OCI-LY7 (cell line): ENCODE measurements at regions of chr2 and their contacts with region 1.

Region 1: GRCh38 chr2:173571021-173571882 is 216.6 kb downstream of the CDCA7 start:
- DNase-seq: peak; percentile 50
- H3K4me3 ChIP-seq: no peak overlapping the region
- H3K27ac ChIP-seq: no peak overlapping the region
- H3K4me1 ChIP-seq: no peaks in the 10 kb centered on the region
- CTCF ChIP-seq: peak; percentile 64

Region 2: GRCh38 chr2:173607606-173608311 is 36.5 kb after region 1 on chr2:
- CTCF ChIA-PET with region 1: no interaction called
- POLR2A ChIA-PET with region 1: interaction called, 5 read pairs
- intact Hi-C with region 1: loop called (anchors 5 kb)
- DNase-seq: no peak
- H3K4me3 ChIP-seq: no peak overlapping the region
- H3K27ac ChIP-seq: no peak overlapping the region
- H3K4me1 ChIP-seq: no peaks in the 10 kb centered on the region
- CTCF ChIP-seq: no peak

Region 3: DNA sequence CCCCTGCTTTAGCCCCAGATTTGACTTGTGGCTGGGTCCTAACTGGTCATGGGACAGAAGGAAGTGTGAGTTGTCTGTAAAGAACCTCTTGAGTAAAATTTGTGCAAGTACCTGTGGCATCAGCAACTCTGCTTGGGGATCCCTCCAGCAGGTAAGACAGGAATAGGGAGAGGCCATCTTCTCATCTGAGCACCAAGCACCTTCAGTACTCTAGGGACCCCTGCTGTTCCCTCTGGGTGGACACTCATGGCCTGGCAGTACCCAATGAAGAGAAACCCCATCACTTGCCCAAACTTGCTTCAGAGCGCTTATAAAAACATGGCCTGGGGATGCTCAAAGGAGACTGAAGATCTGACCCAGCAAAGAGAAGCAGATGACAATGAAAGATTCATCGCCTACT is 96.2 kb after region 1 on chr2:
- CTCF ChIA-PET with region 1: no interaction called
- POLR2A ChIA-PET with region 1: no interaction called
- intact Hi-C with region 1: loop called (anchors 5 kb)
- DNase-seq: no peak
- H3K4me3 ChIP-seq: no peak overlapping the region
- H3K27ac ChIP-seq: no peak overlapping the region
- H3K4me1 ChIP-seq: no peaks in the 10 kb centered on the region
- CTCF ChIP-seq: peak; percentile 29; the same call in 1 of the 2 replicates

Region 4: DNA sequence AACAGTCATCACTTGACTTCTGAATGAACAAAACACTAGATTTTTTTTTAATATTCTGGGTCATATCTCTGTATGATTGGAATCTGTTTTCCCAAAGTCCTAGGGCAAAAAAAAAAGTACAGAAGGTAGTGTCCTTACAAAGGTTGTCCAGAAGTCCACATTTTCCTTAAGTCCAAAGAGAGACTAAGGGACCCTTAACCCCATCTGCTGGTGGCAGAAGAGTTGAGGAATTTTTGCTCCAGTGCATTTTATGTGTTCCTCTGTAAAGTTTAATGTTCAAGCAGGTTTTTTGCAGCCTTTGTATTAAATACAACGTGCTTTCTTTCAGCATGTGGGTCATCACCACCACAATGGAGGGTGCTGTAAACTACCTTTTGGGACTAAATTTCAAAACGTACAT is 178.1 kb after region 1 on chr2:
- CTCF ChIA-PET with region 1: interaction called, 3 read pairs
- POLR2A ChIA-PET with region 1: no interaction called
- intact Hi-C with region 1: loop called (anchors 10 kb)
- DNase-seq: no peak
- H3K4me3 ChIP-seq: no peak overlapping the region
- H3K27ac ChIP-seq: no peak overlapping the region
- H3K4me1 ChIP-seq: no peaks in the 10 kb centered on the region
- CTCF ChIP-seq: peak; percentile 25; the same call in 1 of the 2 replicates

Region 5: DNA sequence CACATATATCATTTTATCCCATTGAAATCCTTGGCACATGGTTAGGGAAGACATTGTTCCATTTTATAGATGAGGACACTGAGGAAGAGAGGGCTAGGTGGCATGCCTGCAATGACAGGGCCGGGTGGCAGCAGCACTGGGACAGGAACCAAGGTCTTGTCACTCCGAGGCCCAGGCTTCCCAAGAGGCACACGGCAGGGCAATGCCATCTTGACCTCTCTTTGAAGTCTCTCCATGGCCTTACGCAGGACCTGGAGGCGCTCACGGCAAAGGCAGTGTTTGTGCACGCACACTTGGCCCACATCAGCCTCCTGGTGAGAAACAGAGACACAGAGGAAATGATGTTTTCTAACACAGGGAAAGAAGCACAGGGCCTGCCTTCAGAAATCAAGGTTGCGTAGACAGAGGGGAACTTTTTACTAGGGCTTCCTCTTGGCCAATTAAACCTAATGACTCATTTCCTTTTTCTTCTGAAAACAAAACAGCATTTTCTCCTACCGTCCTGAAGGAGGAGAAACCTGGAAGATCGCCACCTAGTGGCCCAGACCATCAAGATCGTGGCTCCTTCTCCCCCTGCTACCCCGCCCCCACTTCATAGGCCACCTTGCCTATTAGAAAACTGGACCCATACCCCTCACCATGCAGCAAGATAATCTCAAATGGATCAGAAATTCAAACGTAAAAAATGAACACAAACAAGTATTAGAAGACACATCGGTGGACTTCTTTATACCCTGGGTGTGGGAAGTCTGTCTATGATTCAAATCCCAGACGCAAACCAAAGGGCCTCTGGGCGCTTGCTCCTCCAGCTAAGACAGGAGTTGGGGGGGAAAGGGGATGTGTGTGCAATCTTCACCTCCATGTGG is 468.5 kb after region 1 on chr2:
- CTCF ChIA-PET with region 1: no interaction called
- POLR2A ChIA-PET with region 1: no interaction called
- intact Hi-C with region 1: loop called (anchors 5 kb)
- DNase-seq: peak; percentile 92
- H3K4me3 ChIP-seq: peak overlapping the region; percentile 38
- H3K27ac ChIP-seq: peak overlapping the region; percentile 63
- H3K4me1 ChIP-seq: peaks cover 6% of the 10 kb centered on the region
- CTCF ChIP-seq: peak; percentile 94

Region 6: DNA sequence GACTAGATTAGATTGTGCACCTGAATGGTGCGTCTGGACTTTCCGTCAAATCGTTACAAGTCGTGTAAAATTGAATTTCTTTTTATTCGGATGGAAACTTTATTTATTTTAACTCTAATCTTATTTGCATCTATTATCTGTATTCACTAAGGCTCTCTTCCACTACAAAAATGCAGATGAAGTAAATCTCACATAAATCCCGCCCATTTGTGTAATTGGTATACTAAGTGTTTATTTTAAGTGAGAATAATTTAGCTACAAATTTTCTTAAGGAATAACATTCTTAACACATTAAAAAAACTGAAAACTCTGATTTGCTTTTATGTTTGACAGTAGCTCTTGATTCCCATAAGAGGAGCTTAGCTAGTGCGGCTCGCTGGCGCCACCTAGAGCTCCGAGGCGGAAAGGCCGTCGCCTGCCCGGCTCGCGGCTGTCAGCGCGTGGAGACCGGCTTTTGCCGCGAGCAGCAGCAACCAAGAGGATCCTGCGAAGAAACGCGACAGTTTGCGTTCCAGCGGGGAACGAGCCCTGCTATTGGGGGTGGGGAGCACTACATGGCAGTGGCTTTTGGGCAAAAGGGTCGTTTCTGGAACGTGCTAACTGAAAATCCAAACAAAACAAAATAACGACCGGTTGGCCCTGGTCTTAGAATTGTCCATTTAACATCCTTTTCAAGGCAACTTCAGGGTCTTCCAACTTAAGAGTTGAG is 770.2 kb after region 1 on chr2:
- CTCF ChIA-PET with region 1: no interaction called
- POLR2A ChIA-PET with region 1: no interaction called
- intact Hi-C with region 1: loop called (anchors 2 kb)
- DNase-seq: peak; percentile 83
- H3K4me3 ChIP-seq: peak overlapping the region; percentile 49
- H3K27ac ChIP-seq: no peak overlapping the region
- H3K4me1 ChIP-seq: peaks cover 16% of the 10 kb centered on the region
- CTCF ChIP-seq: peak; percentile 99